Gastrocnemius medialis (tissue), 4 donors: ENCODE measurements at regions of chr19 and their contacts with region 1.

Region 1: GRCh38 chr19:47296036-47296435 is 13.6 kb upstream of the C5AR1 start:
- DNase-seq: peak; percentile 40 to 41
- ATAC-seq: peak; percentile 82 to 83
- H3K4me3 ChIP-seq: no peak overlapping the region
- H3K27ac ChIP-seq: no peak overlapping the region
- H3K4me1 ChIP-seq: no peaks in the 10 kb centered on the region
- H3K27me3 ChIP-seq: no peaks in the 10 kb centered on the region
- CTCF ChIP-seq: peak in 4 of 5 experiments; percentile 64 to 75 (median 70)
- POLR2A ChIP-seq: no peak

Region 2: GRCh38 chr19:47348819-47349795 is 53.1 kb after region 1 on chr19 and contains the start of gene DHX34:
- in situ Hi-C with region 1: no loop called
- intact Hi-C with region 1: no loop called
- DNase-seq: peak; percentile 96 to 99
- ATAC-seq: peak; percentile 100
- H3K4me3 ChIP-seq: peak within 1 kb of the TSS; percentile 64 to 94 (median 82)
- H3K27ac ChIP-seq: peak within 1 kb of the TSS; percentile 79 to 82 (median 80)
- H3K4me1 ChIP-seq: peaks cover 10 to 18% of the 10 kb centered on the region in 2 donors
- H3K27me3 ChIP-seq: no peaks in the 10 kb centered on the region
- CTCF ChIP-seq: peak; percentile 97 to 100 (median 99)
- POLR2A ChIP-seq: peak; percentile 67 to 78
- total RNA-seq, gene DHX34: 14.3 to 19.3 (median 14.7) TPM

Region 3: DNA sequence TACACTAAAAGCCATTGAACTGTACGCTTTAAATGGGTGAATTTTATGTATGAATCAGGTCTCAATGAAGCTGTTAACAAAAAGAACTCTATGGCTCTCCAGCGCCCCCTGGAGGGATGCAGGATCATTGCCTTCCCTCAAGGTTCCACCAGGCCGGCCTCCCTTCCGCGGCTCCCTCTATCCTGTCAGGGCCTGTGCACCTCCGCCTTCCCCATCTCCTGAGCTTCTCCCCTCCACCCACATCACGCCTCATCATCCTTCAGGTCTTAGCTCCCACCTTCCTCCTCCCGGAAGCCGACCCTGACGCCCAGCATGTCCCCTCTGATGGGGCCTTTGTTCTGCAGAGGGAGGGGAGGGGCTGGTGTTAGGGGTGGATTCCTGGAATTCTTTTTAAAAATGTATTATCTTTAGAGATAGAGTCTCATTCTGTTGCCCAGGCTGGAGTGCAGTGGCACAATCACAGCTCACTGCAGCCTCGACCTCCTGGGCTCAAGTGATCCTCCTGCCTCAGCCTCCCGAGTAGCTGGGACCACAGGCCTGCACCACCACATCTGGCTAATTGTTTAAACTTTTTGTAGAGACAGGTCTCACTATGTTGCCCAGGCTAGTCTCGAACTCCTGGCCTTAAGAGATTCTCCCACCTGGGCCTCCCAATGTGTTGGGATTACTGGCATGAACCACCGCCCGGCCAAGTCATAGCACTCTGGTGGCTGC is 95.6 kb after region 1 on chr19:
- in situ Hi-C with region 1: loop called (anchors 5 to 10 kb)
- intact Hi-C with region 1: loop called (anchors 1 kb)
- DNase-seq: peak in 1 of 2 donors; percentile 42
- ATAC-seq: peak; percentile 60 to 62
- H3K4me3 ChIP-seq: no peak overlapping the region
- H3K27ac ChIP-seq: no peak overlapping the region
- H3K4me1 ChIP-seq: no peaks in the 10 kb centered on the region
- H3K27me3 ChIP-seq: peaks cover 0 to 7% (median 4%) of the 10 kb centered on the region in 3 donors
- CTCF ChIP-seq: peak; percentile 72 to 85 (median 80)
- POLR2A ChIP-seq: no peak

Region 4: GRCh38 chr19:47427241-47428176 is 131.5 kb after region 1 on chr19:
- in situ Hi-C with region 1: no loop called
- intact Hi-C with region 1: loop called (anchors 1 kb)
- DNase-seq: peak in 1 of 2 donors; percentile 24
- ATAC-seq: peak; percentile 65 to 70
- H3K4me3 ChIP-seq: no peak overlapping the region
- H3K27ac ChIP-seq: no peak overlapping the region
- H3K4me1 ChIP-seq: peaks cover 11 to 22% of the 10 kb centered on the region in 2 donors
- H3K27me3 ChIP-seq: peaks cover 65 to 82% (median 66%) of the 10 kb centered on the region in 3 donors
- CTCF ChIP-seq: peak; percentile 64 to 82 (median 74)
- POLR2A ChIP-seq: no peak

Region 5: GRCh38 chr19:47745010-47745901 is 449.2 kb after region 1 on chr19 and contains the start of gene NOP53:
- in situ Hi-C with region 1: loop called in 1 of 4 experiments (anchors 25 kb)
- intact Hi-C with region 1: no loop called
- DNase-seq: peak; percentile 95 to 97
- ATAC-seq: peak; percentile 94
- H3K4me3 ChIP-seq: peak within 1 kb of the TSS; percentile 77 to 99 (median 92)
- H3K27ac ChIP-seq: peak within 1 kb of the TSS; percentile 92 to 99 (median 98)
- H3K4me1 ChIP-seq: peaks cover 22 to 33% of the 10 kb centered on the region in 2 donors
- H3K27me3 ChIP-seq: no peaks in the 10 kb centered on the region
- CTCF ChIP-seq: peak in 1 of 5 experiments; percentile 21
- POLR2A ChIP-seq: peak; percentile 77 to 79
- total RNA-seq, gene NOP53: 141 to 262 (median 150) TPM